Naive thymus-derived CD4-positive, alpha-beta T cell (primary cell): ENCODE measurements at regions of chr12 and their contacts with region 1.

Region 1: GRCh38 chr12:52156736-52157565 is 34.9 kb downstream of the KRT80 start:
- DNase-seq: peak; percentile 46 to 80 (median 64)
- ATAC-seq: peak; percentile 56
- H3K4me3 ChIP-seq: no peak overlapping the region
- H3K4me3 Mint-ChIP-seq: no peak overlapping the region
- H3K27ac ChIP-seq: no peak overlapping the region
- H3K27ac Mint-ChIP-seq: peak overlapping the region in 8 of 9 donors; percentile 41 to 97 (median 85)
- H3K4me1 ChIP-seq: peaks cover 25 to 27% of the 10 kb centered on the region in 2 donors
- H3K4me1 Mint-ChIP-seq: peaks cover 22 to 36% (median 34%) of the 10 kb centered on the region in 7 donors
- H3K27me3 ChIP-seq: no peaks in the 10 kb centered on the region
- H3K27me3 Mint-ChIP-seq: no peaks in the 10 kb centered on the region

Region 2: DNA sequence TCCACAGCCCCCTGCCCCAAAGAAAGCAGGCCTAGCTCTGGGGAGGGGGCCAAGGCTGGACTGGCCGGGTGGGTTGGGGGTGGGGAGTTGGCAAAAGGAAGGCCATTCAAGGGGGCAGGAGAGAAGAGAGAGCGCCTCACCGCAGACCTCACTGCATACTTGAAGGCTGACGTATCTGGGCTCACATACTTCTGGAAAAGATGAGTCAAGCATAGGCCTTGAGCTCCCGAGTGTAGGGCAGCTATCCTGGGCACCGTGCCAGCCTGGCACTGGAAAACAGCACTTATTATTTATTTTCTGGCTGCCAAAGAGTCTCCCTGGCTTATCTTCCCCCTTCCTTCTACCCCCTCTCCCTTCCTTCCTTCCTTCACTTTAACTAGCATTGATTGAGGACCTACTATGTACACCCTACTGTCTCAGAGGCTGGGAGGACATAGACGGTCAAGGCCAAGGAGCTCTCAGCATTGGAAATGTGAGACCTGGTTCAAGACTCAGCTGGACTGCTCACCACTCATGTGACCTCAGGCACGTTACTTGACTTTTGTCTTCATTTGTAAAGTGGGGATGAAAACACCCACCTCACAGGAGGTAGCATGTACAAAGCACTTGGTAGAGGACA is 35.3 kb after region 1 on chr12:
- CTCF ChIA-PET with region 1: no interaction called
- POLR2A ChIA-PET with region 1: no interaction called
- intact Hi-C with region 1: no loop called
- DNase-seq: no peak
- ATAC-seq: peak; percentile 75
- H3K4me3 ChIP-seq: no peak overlapping the region
- H3K4me3 Mint-ChIP-seq: no peak overlapping the region
- H3K27ac ChIP-seq: no peak overlapping the region
- H3K27ac Mint-ChIP-seq: no peak overlapping the region
- H3K4me1 ChIP-seq: no peaks in the 10 kb centered on the region
- H3K4me1 Mint-ChIP-seq: peaks cover 0 to 9% (median 0%) of the 10 kb centered on the region in 7 donors
- H3K27me3 ChIP-seq: no peaks in the 10 kb centered on the region
- H3K27me3 Mint-ChIP-seq: peaks cover 0 to 16% (median 5%) of the 10 kb centered on the region in 5 donors

Region 3: DNA sequence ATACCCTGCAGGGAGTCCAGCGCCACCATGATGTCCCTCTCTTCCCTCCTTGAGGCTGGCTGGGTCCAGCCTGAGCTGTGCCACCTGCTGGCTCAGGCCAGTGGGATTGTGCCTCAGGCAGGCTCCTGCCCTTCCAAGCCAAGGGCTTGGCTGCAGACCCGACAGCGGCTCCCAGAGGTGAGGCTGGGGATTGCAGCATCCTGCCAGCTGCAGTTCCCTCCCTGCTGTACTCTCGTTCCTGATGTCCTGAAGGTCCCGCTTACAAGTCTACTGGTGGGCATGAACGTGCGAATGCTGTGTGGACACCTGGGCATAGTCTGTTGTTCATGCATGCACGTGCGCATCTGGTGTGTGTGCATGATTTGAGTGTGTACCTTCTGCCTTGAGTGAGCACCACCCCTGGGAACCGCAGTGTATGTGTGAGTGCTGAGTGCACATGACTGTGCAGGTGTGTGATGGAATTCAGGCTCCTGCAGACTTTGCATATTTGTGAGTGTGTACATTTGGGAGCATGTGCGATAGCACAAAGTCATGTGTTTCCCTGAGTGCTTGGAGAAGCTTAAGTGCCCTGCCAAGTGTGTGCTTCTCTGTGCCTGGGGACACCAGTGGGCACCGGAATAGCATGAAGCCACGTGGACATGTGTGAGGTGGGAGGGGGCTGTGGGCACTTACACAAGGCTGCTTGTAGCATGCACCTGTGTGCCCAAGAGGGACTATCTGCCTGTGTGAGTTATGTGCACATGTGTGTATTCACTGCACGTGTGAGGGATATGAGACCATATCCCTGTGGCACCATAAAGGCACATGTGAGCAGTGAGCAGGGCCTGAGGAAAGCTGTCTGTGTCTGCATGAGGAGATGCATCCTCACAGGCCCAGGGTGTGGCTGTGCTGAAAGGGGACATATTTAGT is 56.8 kb after region 1 on chr12:
- CTCF ChIA-PET with region 1: interaction called, 4 read pairs
- POLR2A ChIA-PET with region 1: interaction called, 3 read pairs
- intact Hi-C with region 1: loop called in 1 of 2 experiments (anchors 1 kb)
- DNase-seq: peak in 7 of 9 donors; percentile 14 to 71 (median 29)
- ATAC-seq: peak; percentile 86
- H3K4me3 ChIP-seq: no peak overlapping the region
- H3K4me3 Mint-ChIP-seq: no peak overlapping the region
- H3K27ac ChIP-seq: no peak overlapping the region
- H3K27ac Mint-ChIP-seq: no peak overlapping the region
- H3K4me1 ChIP-seq: no peaks in the 10 kb centered on the region
- H3K4me1 Mint-ChIP-seq: peaks cover 0 to 6% (median 4%) of the 10 kb centered on the region in 7 donors
- H3K27me3 ChIP-seq: no peaks in the 10 kb centered on the region
- H3K27me3 Mint-ChIP-seq: peaks cover 0 to 29% (median 2%) of the 10 kb centered on the region in 5 donors

Region 4: DNA sequence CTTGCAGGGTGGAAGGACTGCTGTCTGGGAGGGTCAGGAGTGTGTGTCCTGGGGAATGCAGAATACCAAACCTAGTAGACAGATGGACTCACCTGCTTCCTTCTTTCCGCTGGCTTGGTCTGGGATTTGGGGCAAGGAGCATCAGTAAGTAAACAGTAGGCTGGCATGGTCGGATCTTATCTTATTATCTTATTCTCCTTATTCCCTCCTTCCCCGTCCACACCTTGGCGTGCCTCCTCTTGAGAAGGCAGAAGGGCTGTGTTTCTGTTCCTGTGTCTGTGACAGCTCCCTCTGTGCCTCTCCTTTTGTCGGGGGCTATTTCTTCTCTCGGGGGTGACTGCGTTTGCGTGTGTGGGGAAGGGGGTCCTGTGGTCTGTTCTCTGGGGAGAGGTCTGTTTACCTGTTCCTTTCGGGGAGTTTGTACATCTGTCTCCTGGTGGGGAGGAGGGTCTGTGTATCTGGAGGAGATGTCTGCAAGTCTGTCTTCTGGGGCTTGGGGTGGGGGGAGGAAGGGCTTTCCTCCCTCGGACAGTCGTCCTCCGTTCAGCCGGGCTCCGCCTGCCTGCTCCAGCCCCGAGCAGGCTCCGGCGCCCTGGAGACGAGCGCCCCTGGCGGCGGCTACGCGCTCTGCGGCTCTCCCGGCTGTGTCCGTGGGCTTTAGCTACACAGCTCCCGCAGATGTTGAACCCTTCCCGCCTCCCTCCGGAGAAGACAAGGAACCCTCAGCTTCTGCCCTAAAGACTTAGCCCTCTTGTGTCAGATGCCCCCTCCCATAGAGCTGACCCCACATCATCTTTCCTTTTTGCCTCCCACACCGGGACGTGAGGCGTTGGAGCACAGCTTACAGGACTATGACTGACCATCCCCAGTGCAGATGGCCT is 121.8 kb after region 1 on chr12:
- CTCF ChIA-PET with region 1: interaction called, 6 read pairs
- POLR2A ChIA-PET with region 1: interaction called, 3 read pairs
- intact Hi-C with region 1: loop called in 1 of 2 experiments (anchors 2 kb)
- DNase-seq: peak; percentile 35 to 85 (median 62)
- ATAC-seq: peak; percentile 90
- H3K4me3 ChIP-seq: no peak overlapping the region
- H3K4me3 Mint-ChIP-seq: peak overlapping the region in 6 of 10 donors; percentile 1 to 56 (median 25)
- H3K27ac ChIP-seq: no peak overlapping the region
- H3K27ac Mint-ChIP-seq: peak overlapping the region in 1 of 9 donors; percentile 30
- H3K4me1 ChIP-seq: no peaks in the 10 kb centered on the region
- H3K4me1 Mint-ChIP-seq: peaks cover 0 to 15% (median 5%) of the 10 kb centered on the region in 7 donors
- H3K27me3 ChIP-seq: peaks cover 0 to 5% of the 10 kb centered on the region in 2 donors
- H3K27me3 Mint-ChIP-seq: peaks cover 16 to 57% (median 32%) of the 10 kb centered on the region in 5 donors

Region 5: GRCh38 chr12:52327052-52327829 is 170.3 kb after region 1 on chr12:
- CTCF ChIA-PET with region 1: interaction called, 55 read pairs
- POLR2A ChIA-PET with region 1: no interaction called
- intact Hi-C with region 1: loop called (anchors 1 kb)
- DNase-seq: peak; percentile 42 to 81 (median 72)
- ATAC-seq: peak; percentile 97
- H3K4me3 ChIP-seq: no peak overlapping the region
- H3K4me3 Mint-ChIP-seq: no peak overlapping the region
- H3K27ac ChIP-seq: no peak overlapping the region
- H3K27ac Mint-ChIP-seq: peak overlapping the region in 1 of 9 donors; percentile 1
- H3K4me1 ChIP-seq: peaks cover 0 to 6% of the 10 kb centered on the region in 2 donors
- H3K4me1 Mint-ChIP-seq: peaks cover 0 to 13% (median 6%) of the 10 kb centered on the region in 7 donors
- H3K27me3 ChIP-seq: no peaks in the 10 kb centered on the region
- H3K27me3 Mint-ChIP-seq: peaks cover 1 to 32% (median 19%) of the 10 kb centered on the region in 5 donors

Region 6: GRCh38 chr12:52372216-52373154 is 215.5 kb after region 1 on chr12:
- CTCF ChIA-PET with region 1: no interaction called
- POLR2A ChIA-PET with region 1: no interaction called
- intact Hi-C with region 1: loop called in 1 of 2 experiments (anchors 2 kb)
- DNase-seq: peak in 7 of 9 donors; percentile 30 to 60 (median 42)
- ATAC-seq: peak; percentile 70
- H3K4me3 ChIP-seq: no peak overlapping the region
- H3K4me3 Mint-ChIP-seq: no peak overlapping the region
- H3K27ac ChIP-seq: no peak overlapping the region
- H3K27ac Mint-ChIP-seq: no peak overlapping the region
- H3K4me1 ChIP-seq: no peaks in the 10 kb centered on the region
- H3K4me1 Mint-ChIP-seq: no peaks in the 10 kb centered on the region
- H3K27me3 ChIP-seq: no peaks in the 10 kb centered on the region
- H3K27me3 Mint-ChIP-seq: peaks cover 2 to 31% (median 10%) of the 10 kb centered on the region in 5 donors

Region 7: DNA sequence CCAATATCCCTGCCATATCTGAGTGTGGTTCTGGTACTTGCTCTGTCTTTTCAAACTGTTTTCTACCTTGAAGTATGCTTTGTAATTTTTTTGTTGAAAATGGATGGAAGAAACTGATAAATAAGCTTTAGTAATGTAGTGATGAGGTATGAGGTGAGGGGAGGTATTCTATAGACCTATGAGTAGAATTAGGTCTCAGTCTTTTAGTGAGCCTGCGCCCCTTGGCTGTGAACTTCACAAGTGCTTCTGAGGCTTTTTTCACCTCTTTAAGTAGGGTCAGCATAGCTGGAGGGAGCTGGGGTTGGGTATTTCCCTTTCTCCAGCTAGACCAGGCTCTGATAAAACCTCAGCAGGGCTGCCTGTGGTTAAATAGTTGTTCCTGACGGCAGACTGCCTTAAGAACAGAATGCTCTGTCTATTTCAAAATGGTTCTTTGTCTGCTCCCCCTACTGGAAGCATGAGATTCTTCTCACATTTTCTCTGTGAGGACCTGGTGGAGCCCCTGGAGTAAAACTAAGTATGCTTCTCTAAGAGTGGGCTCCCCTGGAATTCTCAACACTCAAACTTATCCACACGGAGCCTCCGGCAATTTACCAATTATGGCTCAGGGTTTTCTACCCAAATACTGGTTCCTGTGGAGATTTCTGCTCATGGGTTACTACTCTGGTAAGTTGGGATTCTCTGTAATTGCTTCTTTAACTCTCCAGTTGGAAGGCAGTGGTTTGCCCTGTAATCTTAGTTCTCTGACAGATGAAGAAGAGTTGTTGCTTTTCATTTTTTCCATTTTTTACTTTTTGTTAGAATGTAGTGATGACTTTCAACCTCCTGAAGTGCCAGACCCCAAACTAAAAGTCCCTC is 350.1 kb after region 1 on chr12:
- CTCF ChIA-PET with region 1: no interaction called
- POLR2A ChIA-PET with region 1: no interaction called
- intact Hi-C with region 1: loop called (anchors 1 to 5 kb)
- DNase-seq: peak in 5 of 9 donors; percentile 13 to 37 (median 26)
- ATAC-seq: peak; percentile 60
- H3K4me3 ChIP-seq: no peak overlapping the region
- H3K4me3 Mint-ChIP-seq: no peak overlapping the region
- H3K27ac ChIP-seq: no peak overlapping the region
- H3K27ac Mint-ChIP-seq: no peak overlapping the region
- H3K4me1 ChIP-seq: no peaks in the 10 kb centered on the region
- H3K4me1 Mint-ChIP-seq: peaks cover 0 to 3% (median 0%) of the 10 kb centered on the region in 7 donors
- H3K27me3 ChIP-seq: no peaks in the 10 kb centered on the region
- H3K27me3 Mint-ChIP-seq: peaks cover 18 to 49% (median 36%) of the 10 kb centered on the region in 5 donors